IMR-90 (cell line): ENCODE measurements at regions of chr15 and their contacts with region 1.

Region 1: DNA sequence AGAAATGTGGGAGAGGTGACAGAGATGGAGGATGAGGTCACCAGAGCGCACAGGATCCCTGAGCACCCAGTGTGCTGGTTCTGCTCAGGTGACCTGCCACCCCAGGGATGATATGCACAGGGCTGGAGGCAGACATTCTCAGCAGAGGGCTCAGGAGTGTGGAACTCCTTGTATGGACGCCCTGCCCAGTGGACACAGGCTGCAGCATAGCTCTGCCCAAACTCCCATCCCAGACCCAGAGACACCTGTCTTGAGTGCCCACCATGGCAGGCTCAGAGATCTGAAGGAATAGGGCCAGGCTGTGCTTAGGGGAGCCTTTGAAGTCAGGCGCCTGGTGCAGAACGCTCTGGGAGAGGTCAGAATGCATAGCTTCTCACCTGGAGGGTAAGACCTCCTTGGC is 47.3 kb downstream of the PPCDC start:
- DNase-seq: no peak
- ATAC-seq: no peak
- H3K4me3 ChIP-seq: no peak overlapping the region
- H3K27ac ChIP-seq: no peak overlapping the region
- H3K4me1 ChIP-seq: no peaks in the 10 kb centered on the region
- H3K27me3 ChIP-seq: peaks cover 17% of the 10 kb centered on the region
- CTCF ChIP-seq: no peak
- POLR2A ChIP-seq: no peak
- RAD21 ChIP-seq: no peak

Region 2: DNA sequence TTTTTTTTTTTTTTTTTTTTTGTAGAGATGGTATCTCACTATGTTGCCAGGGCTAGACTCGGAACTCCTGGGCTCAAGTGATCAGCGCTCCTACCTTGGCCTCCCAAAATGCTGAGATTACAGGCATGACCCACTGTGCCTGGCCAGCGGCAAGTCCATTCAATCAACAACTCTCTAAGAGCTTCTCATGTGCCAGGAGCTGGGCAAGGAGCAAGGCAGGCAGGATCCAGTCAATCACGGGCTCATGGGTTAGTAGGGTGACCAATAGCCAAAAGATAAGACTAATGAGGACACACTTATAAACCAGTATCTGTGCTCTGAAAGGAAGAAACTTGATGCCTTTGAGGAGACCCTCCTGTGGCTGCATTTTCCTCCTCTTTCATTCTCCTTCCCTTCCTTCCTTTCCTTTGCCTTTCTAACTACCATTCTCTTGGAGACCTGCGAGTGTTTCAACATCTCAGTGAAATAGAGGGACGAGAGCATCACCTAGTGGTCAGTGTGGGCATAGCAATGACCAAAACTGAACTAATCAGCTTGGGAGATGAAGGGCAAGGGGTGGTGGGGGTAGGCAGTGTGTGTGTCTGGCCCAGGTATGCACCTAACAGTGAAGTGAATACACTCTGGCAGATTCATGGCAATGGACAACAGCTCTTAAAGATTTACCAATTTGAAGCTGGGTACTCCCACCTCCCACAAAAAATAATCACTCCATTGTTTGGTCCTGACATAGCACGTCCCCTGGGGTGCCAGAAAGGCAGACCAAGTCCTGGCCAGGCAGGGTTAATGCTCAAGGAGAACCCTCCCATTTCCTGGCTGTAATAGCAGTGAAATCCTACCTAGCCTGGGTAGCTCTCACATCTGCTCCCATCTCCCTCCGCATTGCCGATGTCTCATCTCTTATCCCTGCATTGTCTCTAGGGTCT is 120.3 kb before region 1 on chr15:
- CTCF ChIA-PET with region 1: no interaction called
- POLR2A ChIA-PET with region 1: no interaction called
- dilution Hi-C with region 1: no loop called
- in situ Hi-C with region 1: no loop called
- intact Hi-C with region 1: no loop called
- DNase-seq: peak; percentile 67
- ATAC-seq: peak; percentile 70
- H3K4me3 ChIP-seq: no peak overlapping the region
- H3K27ac ChIP-seq: no peak overlapping the region
- H3K4me1 ChIP-seq: peaks cover 5% of the 10 kb centered on the region; the same call in 1 of the 2 replicates
- H3K27me3 ChIP-seq: peaks cover 3% of the 10 kb centered on the region
- CTCF ChIP-seq: peak; percentile 97
- POLR2A ChIP-seq: no peak; the same call in 1 of the 2 replicates
- RAD21 ChIP-seq: peak; percentile 94

Region 3: DNA sequence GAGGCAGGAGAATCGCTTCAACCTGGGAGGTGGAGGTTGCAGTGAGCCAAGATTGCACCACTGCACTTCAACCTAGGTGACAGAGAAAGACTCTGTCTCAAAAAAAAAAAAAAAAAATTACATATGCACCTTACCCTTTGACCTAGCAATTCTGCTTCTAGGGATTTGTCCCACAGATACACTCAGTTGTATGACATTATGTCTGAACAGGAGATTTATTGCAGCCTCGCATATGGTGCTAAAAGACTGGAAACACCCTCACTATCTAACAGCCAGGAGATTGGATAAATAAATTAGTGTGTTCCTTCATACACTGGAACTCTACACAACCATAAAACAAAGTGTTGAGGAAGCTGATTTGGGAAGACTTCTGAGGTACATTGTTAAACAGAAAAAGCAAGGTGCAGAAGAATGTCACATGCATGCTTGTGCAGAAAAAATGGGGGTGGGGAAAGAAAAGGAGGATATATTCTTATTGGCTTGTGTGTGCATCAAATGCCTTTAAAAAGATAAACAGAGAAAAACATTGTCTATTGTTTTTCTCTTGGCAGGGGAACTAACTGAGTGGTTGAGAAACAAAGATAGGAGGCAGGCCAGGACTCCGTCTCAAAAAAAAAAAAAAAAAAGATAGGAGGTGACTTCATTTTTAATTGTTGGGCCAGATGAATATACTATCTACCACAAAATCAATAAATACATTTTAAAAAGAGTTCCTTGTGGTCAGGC is 16.3 kb before region 1 on chr15:
- CTCF ChIA-PET with region 1: no interaction called
- POLR2A ChIA-PET with region 1: interaction called, 32 read pairs
- dilution Hi-C with region 1: no loop called
- in situ Hi-C with region 1: no loop called
- intact Hi-C with region 1: no loop called
- DNase-seq: no peak
- ATAC-seq: no peak
- H3K4me3 ChIP-seq: no peak overlapping the region
- H3K27ac ChIP-seq: no peak overlapping the region
- H3K4me1 ChIP-seq: no peaks in the 10 kb centered on the region
- H3K27me3 ChIP-seq: no peaks in the 10 kb centered on the region
- CTCF ChIP-seq: no peak
- POLR2A ChIP-seq: no peak
- RAD21 ChIP-seq: no peak